AG04449 (cell line): ENCODE measurements at regions of chr17 and their contacts with region 1.

Region 1: DNA sequence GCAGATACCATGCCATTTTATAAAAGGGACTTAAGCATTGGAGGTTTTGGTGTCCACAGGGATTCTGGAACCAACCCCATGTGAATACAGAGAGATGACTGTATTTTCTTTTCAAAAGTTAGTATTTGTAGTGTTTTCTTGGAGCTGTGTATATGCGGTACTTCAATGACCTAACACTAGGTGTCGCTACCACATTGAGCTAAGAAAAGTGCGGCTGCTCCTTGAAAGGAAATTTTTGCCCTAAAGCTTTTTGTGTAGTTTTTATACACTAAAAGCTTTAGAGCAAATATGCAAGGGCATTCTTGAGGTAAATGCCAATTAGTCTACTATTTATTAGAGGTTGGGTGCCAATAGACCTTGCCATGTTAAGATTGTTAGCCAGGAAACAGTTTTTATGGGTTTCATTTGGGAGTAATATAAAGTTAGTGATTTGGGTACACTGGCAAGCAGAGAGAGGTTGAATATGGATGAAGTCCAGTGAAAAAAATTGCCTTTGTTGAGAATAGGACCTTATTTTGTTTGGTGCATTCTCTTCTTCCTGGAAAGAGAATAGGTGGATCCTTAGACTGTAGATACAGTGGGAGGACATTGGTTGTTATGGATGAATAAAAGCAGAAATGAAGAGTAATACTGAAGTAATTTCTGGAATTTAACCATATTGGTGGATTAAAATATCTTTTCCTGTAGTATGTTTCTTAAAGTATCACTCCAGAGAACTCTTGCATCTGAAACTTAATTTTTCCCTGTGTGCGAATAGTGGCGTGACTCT is 43.3 kb downstream of the BCAS3 start:
- DNase-seq: peak; percentile 37
- H3K4me3 ChIP-seq: no peak overlapping the region
- CTCF ChIP-seq: peak; percentile 74

Region 2: GRCh38 chr17:60685437-60685836 is 35.5 kb before region 1 on chr17:
- CTCF ChIA-PET with region 1: interaction called, 13 read pairs
- POLR2A ChIA-PET with region 1: no interaction called
- DNase-seq: no peak
- H3K4me3 ChIP-seq: no peak overlapping the region
- CTCF ChIP-seq: no peak

Region 3: DNA sequence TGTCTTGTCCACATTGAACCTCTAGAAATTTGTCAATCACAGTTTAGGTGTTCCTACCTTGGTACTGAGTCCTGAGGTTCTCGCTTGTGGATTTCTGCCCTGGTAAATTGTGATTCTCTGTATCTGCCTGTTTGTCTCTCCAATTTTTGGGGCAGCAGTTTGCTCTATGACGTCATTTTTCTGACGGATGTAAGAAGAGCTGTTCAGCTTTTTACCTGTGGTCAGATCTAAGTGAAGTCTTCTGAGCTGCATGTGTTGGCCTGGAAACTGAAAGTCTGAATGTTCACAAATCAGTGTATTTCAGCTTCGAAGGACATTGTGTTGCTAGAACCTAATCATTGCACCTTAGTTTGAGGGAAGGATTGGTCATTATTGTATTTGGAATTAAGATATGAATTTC is 20.1 kb after region 1 on chr17:
- CTCF ChIA-PET with region 1: interaction called, 15 read pairs
- POLR2A ChIA-PET with region 1: no interaction called
- DNase-seq: no peak
- H3K4me3 ChIP-seq: no peak overlapping the region
- CTCF ChIP-seq: no peak

Region 4: GRCh38 chr17:61002316-61002736 is 281.4 kb after region 1 on chr17:
- CTCF ChIA-PET with region 1: interaction called, 17 read pairs
- POLR2A ChIA-PET with region 1: no interaction called
- DNase-seq: no peak
- H3K4me3 ChIP-seq: no peak overlapping the region
- CTCF ChIP-seq: peak; percentile 7